GM13976 (cell line): ENCODE measurements at regions of chr3 and their contacts with region 1.

Region 1: DNA sequence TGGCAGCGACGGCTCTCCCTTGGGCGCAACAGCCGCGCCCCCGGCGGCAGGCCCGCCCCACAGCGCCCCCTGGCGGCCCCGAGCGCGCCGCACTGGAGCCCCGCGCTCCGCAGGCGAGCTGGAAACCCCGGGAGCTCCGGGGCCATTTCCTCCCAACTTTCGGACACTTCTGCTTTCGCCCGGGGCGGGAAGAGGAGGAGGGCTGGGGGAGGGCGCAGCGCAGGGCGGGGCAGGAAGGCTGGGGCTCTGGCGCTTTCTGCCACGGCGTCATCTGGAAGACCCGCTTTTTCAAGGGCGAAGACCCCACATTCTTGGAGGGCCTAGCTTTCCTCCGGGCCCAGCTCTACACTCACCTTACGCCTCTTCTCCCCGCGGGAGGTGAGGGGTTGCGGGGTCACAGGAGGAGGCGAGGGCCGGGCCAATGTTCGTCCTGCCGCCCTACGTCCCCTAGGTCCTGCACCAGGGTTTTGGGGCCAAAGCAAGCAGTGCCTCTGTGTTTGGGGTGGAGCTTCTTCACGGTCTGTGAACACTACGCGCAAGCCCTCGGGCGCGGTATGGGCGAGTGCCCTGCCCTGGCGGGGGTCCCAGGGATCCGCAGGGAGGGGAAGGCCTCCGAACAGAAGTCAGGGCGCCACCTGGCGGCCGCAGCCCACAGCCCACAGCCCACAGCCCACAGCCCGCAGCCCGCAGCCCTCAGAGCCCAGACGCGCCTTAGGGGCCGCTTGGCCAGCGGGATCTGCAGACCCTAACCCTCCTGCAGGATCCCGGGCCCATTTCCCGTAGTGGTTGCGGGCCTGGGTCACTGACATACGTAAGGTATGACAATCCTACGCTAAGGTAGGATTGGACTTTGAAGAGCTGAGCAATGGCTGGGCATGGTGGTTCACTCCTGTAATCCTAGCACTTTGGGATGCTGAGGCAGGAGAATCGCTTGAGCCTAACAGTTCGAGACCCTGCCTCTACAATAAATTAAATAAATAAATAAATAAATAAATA is 31.1 kb downstream of the FOXL2 start:
- DNase-seq: peak; percentile 91
- CTCF ChIP-seq: peak; percentile 92

Region 2: GRCh38 chr3:138694287-138695007 is 221.4 kb before region 1 on chr3:
- in situ Hi-C with region 1: loop called (anchors 5 kb)
- DNase-seq: no peak
- CTCF ChIP-seq: no peak